ENCODE measurements at regions of chr17 and their contacts with region 1.

Region 1: GRCh38 chr17:72725433-72726068 is 366.9 kb downstream of the SLC39A11 start:
- DNase-seq: peak; percentile 72 to 83
- ATAC-seq: peak; percentile 85 to 86
- H3K4me3 ChIP-seq: no peak overlapping the region
- H3K27ac ChIP-seq: peak overlapping the region; percentile 11 to 61; a peak in 3 of 6 replicates
- H3K4me1 ChIP-seq: peaks cover 20% of the 10 kb centered on the region
- CTCF ChIP-seq: peak; percentile 97
- EP300 ChIP-seq: no peak
- POLR2A ChIP-seq: no peak
- RAD21 ChIP-seq: peak; percentile 95 to 96

Region 2: DNA sequence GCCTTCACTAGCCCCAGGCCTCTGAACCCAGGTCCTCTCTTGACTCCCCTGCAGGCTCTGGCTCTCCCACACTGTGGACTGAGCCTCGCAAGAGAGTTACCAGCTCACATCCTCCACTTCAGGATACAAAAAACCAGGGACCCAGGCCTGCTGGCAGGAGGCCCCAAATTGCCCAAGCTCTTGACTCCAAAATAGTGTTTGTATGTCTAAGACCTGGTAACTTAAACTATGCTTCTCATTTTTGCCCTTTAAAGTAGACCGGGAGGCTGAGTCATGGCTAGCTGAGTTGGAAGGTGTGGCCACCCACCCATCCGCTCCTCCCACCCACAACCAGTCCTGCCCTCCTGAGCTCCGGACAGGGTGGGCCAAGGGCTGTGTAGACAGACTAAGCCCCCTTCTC is 354.7 kb before region 1 on chr17:
- CTCF ChIA-PET with region 1: no interaction called
- POLR2A ChIA-PET with region 1: no interaction called
- DNase-seq: peak; percentile 54 to 60
- ATAC-seq: peak; percentile 71 to 85; a peak in 5 of 6 replicates
- H3K4me3 ChIP-seq: no peak overlapping the region
- H3K27ac ChIP-seq: peak overlapping the region; percentile 64 to 82
- H3K4me1 ChIP-seq: peaks cover 23% of the 10 kb centered on the region
- CTCF ChIP-seq: no peak
- EP300 ChIP-seq: no peak
- POLR2A ChIP-seq: no peak
- RAD21 ChIP-seq: no peak

Region 3: GRCh38 chr17:72465191-72466024 is 260.1 kb before region 1 on chr17:
- CTCF ChIA-PET with region 1: no interaction called
- POLR2A ChIA-PET with region 1: no interaction called
- DNase-seq: peak; percentile 98
- ATAC-seq: peak; percentile 92 to 94
- H3K4me3 ChIP-seq: peak overlapping the region; percentile 34
- H3K27ac ChIP-seq: peak overlapping the region; percentile 84 to 88
- H3K4me1 ChIP-seq: peaks cover 97% of the 10 kb centered on the region
- CTCF ChIP-seq: no peak
- EP300 ChIP-seq: peak; percentile 76 to 80; a peak in 3 of 5 replicates
- POLR2A ChIP-seq: no peak
- RAD21 ChIP-seq: peak; percentile 29 to 49

Region 4: DNA sequence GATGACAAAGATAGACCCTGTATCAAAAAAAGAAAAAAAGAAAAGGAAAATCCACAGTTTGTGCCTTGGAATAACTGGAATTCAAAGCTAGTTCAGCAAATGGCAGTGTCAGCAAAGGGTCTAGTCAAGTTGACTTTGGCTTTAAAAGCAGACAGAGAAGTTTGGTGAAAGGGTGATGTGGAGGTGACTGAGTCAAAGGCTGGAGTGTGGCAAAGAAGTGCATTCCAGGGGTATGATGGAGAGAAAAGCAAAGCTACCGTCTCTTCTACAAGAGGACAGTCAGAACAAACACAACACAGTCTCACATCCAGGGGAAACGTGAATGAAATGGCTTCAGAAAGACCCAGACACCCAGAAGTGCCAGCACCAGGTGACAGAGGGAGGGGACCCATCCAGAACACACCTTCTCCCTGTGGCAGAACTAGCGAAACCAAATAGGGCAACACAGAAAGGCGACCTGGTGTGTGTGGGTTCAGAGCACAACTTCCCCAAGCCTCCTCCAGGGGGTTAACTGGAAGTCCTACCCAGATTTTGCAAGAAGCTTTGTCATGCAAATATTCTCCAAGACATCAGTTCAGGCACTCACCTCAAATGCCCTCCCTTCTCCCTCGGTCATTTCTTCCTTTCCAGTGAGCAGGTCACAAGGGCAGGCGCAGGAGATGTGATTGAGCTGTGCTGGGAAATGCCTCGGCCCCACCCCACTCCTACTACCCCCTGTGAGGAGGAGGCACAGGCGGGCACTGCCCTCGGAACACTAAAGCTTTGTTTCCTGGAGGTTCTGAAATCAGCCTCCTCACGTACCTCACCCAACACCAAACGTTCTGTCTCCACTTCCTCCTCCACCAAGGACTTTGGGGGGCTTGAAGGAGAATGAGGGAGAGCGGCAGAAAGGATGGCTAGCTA is 122.8 kb before region 1 on chr17:
- CTCF ChIA-PET with region 1: interaction called, 46 read pairs
- POLR2A ChIA-PET with region 1: no interaction called
- DNase-seq: peak; percentile 97
- ATAC-seq: peak; percentile 92 to 93
- H3K4me3 ChIP-seq: 0 out of 3 replicates have a peak overlapping the region, but pooled peaks have one; percentile 10
- H3K27ac ChIP-seq: peak overlapping the region; percentile 90 to 95
- H3K4me1 ChIP-seq: peaks cover 65% of the 10 kb centered on the region
- CTCF ChIP-seq: no peak
- EP300 ChIP-seq: peak; percentile 72 to 79; a peak in 2 of 5 replicates
- POLR2A ChIP-seq: no peak
- RAD21 ChIP-seq: peak; percentile 32 to 33; a peak in 2 of 5 replicates

Region 5: DNA sequence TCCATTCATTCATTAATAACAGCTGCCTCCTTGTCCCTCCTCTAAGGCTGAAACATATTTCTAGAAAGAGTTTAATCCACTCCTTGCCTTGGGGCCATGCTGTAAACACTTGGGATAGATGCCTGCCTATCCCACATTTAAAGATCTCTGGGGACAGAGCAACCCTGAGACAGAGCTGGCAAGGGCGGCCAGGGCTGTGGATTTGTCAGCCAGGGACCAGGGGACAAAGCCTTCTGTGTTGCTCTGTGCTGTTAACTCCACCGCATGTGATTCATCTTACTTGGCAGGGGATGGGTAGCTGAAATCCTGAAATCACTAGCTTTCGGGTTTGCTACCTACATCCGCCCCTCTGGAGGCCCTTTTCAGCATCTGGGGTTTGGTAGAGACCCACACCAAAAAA is 26.0 kb before region 1 on chr17:
- CTCF ChIA-PET with region 1: interaction called, 102 read pairs
- POLR2A ChIA-PET with region 1: no interaction called
- DNase-seq: no peak
- ATAC-seq: no peak
- H3K4me3 ChIP-seq: no peak overlapping the region
- H3K27ac ChIP-seq: peak overlapping the region; percentile 55 to 85
- H3K4me1 ChIP-seq: peaks cover 53% of the 10 kb centered on the region
- CTCF ChIP-seq: no peak
- EP300 ChIP-seq: no peak
- POLR2A ChIP-seq: no peak
- RAD21 ChIP-seq: no peak

Region 6: GRCh38 chr17:73156166-73156840 is 430.8 kb after region 1 on chr17:
- CTCF ChIA-PET with region 1: interaction called, 205 read pairs
- POLR2A ChIA-PET with region 1: interaction called, 3 read pairs
- DNase-seq: peak; percentile 66 to 88
- ATAC-seq: peak; percentile 97 to 98
- H3K4me3 ChIP-seq: no peak overlapping the region
- H3K27ac ChIP-seq: peak overlapping the region in 1 of 2 experiments; percentile 50; a peak in 2 of 6 replicates
- H3K4me1 ChIP-seq: peaks cover 15% of the 10 kb centered on the region
- CTCF ChIP-seq: peak; percentile 67
- EP300 ChIP-seq: no peak
- POLR2A ChIP-seq: no peak
- RAD21 ChIP-seq: peak; percentile 81 to 84

Region 7: DNA sequence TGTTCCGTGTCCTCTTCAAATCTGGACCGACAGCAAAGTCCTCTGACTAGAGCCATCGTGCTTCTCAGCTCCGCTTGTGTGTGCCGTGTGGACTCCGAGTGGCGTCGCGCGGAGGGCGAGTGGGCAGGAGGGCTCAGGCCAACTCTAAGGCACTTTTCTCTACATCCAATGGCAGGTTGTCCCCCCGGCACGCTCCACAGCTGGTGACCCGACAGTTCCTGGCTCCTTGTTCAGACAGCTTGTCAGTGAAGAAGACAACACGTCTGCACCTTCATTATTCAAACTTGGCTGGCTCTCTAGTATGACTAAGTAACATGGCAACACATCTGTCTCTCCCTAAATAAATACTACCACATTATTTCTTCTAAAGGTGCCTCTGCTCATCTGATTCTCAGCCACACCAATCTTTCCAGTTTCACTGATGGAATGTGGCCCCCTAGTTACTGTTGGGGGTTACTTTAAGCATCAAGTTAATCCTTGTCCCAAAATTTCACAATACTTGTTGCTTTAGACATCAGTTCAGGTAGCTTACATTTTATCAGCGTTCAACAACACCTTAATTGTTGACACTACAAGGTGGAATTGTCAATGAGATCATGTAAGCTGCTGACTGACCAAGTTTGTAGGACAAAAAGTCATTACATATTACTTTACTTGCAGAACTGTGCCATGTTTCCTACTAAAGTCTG is 482.7 kb after region 1 on chr17:
- CTCF ChIA-PET with region 1: interaction called, 11 read pairs
- POLR2A ChIA-PET with region 1: no interaction called
- DNase-seq: no peak
- ATAC-seq: no peak
- H3K4me3 ChIP-seq: no peak overlapping the region
- H3K27ac ChIP-seq: no peak overlapping the region
- H3K4me1 ChIP-seq: no peaks in the 10 kb centered on the region
- CTCF ChIP-seq: no peak
- EP300 ChIP-seq: no peak
- POLR2A ChIP-seq: no peak
- RAD21 ChIP-seq: no peak

Region 8: DNA sequence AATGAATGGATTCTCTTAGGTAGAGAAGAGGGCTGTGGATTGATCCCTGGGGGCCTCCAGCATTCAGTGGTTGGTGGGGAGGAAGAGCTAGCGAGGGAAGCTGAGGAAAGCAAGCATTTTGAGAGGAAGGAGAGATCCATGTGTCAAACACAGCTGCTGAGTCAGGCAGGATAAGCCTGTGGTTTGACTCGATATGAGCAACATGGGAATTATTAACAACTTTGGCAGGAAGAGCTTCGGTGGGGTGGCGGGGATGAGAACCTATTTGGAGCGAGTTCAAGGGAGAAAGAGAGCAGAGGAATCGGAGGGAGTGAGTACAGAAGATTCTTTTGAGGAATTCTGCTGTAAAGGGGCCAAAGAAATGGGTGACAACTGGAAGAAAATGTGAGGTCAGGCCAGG is 645.7 kb after region 1 on chr17:
- CTCF ChIA-PET with region 1: interaction called, 65 read pairs
- POLR2A ChIA-PET with region 1: no interaction called
- DNase-seq: peak in 1 of 2 experiments; percentile 44
- ATAC-seq: no peak
- H3K4me3 ChIP-seq: no peak overlapping the region
- H3K27ac ChIP-seq: no peak overlapping the region
- H3K4me1 ChIP-seq: 0 out of 3 replicates have a peak, but pooled peaks cover 7% of the 10 kb centered on the region
- CTCF ChIP-seq: no peak
- EP300 ChIP-seq: no peak
- POLR2A ChIP-seq: no peak
- RAD21 ChIP-seq: no peak